OCI-LY7 (cell line): ENCODE measurements at regions of chr22 and their contacts with region 1.

Region 1: GRCh38 chr22:49936018-49936952 is 17.9 kb downstream of the CRELD2 start:
- DNase-seq: peak; percentile 83
- H3K4me3 ChIP-seq: peak overlapping the region; percentile 66
- H3K27ac ChIP-seq: peak overlapping the region; percentile 81
- H3K4me1 ChIP-seq: peaks cover 52% of the 10 kb centered on the region
- CTCF ChIP-seq: no peak

Region 2: GRCh38 chr22:49960159-49961004 is 24.1 kb after region 1 on chr22 and contains the start of gene PIM3:
- CTCF ChIA-PET with region 1: no interaction called
- POLR2A ChIA-PET with region 1: no interaction called
- intact Hi-C with region 1: loop called (anchors 1 kb)
- DNase-seq: peak; percentile 99
- H3K4me3 ChIP-seq: peak within 1 kb of the TSS; percentile 98
- H3K27ac ChIP-seq: peak within 1 kb of the TSS; percentile 66
- H3K4me1 ChIP-seq: peaks cover 35% of the 10 kb centered on the region
- CTCF ChIP-seq: no peak
- total RNA-seq, gene PIM3: 74.3 and 81.7 TPM in 2 replicates

Region 3: GRCh38 chr22:50105208-50106100 is 169.2 kb after region 1 on chr22:
- CTCF ChIA-PET with region 1: no interaction called
- POLR2A ChIA-PET with region 1: interaction called, 5 read pairs
- intact Hi-C with region 1: loop called (anchors 10 kb)
- DNase-seq: peak; percentile 81
- H3K4me3 ChIP-seq: peak overlapping the region; percentile 48
- H3K27ac ChIP-seq: peak overlapping the region; percentile 51
- H3K4me1 ChIP-seq: peaks cover 60% of the 10 kb centered on the region
- CTCF ChIP-seq: no peak